PC-9 (cell line): ENCODE measurements at regions of chr2 and their contacts with region 1.

Region 1: GRCh38 chr2:128921751-128922150 is 603.1 kb upstream of the HS6ST1 start:
- DNase-seq: no peak
- H3K4me3 ChIP-seq: no peak overlapping the region
- H3K27ac ChIP-seq: no peak overlapping the region
- H3K4me1 ChIP-seq: no peaks in the 10 kb centered on the region
- H3K27me3 ChIP-seq: no peaks in the 10 kb centered on the region
- CTCF ChIP-seq: no peak

Region 2: DNA sequence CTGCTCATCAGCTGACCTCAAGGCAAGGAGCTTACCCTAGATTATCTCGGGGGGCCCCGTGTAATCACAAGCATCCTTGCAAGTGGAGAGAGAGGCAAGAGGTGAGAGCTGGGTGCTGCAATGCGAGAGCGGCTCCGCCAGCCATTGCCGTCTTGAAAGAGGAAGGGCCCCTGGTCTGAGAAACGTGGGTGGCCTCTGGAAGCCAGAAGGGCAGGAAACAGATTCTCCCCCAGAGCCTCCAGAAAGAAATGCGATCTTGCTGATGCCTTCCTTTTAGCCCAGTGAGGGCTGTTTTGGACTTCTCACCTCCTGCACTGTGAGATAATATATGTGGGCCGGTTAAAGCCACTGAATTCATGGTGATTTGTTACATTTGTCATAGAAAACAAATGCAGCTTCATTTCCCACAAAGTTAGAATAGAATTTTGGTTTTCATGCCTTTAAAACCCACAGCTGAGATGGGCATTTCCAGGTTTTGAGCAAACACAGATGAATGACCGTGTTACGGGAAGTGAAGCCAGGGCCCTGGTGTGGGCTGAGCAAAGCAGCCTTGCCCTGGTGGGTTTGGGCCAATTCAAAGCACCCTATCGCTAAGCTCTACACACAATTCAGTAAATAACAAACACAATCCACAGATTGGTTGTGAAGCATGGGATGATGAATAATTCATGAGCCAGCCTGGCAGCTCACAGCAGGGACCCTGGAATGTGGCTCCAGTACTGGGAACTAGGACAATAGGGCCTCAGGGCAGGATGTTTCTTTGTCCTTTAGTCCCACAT is 283.2 kb before region 1 on chr2:
- CTCF ChIA-PET with region 1: no interaction called
- POLR2A ChIA-PET with region 1: no interaction called
- intact Hi-C with region 1: no loop called
- DNase-seq: peak in 1 of 2 experiments; percentile 63
- H3K4me3 ChIP-seq: no peak overlapping the region
- H3K27ac ChIP-seq: no peak overlapping the region
- H3K4me1 ChIP-seq: no peaks in the 10 kb centered on the region
- H3K27me3 ChIP-seq: no peaks in the 10 kb centered on the region
- CTCF ChIP-seq: no peak

Region 3: DNA sequence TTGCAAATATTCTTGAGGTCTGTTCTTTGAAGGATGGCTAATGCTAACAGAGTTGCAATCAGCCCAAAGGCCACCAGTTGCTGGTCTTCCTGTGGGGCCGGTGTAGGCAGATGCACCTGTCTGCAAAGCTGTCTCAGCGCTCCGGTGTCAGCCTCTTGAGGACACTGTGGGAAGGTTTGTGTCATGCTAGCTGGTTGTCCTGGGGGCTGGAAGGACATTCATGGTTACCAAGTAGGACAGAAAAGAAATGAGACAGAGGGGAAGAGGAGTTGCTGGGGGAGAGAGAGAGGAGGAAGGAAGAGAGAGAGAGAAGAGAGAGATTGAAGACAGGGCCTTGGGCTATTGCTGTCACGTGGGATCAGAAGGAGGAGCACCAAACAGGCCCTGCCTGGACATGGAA is 36.5 kb after region 1 on chr2:
- CTCF ChIA-PET with region 1: no interaction called
- POLR2A ChIA-PET with region 1: interaction called, 14 read pairs
- intact Hi-C with region 1: no loop called
- DNase-seq: no peak
- H3K4me3 ChIP-seq: no peak overlapping the region
- H3K27ac ChIP-seq: no peak overlapping the region
- H3K4me1 ChIP-seq: no peaks in the 10 kb centered on the region
- H3K27me3 ChIP-seq: peaks cover 34% of the 10 kb centered on the region
- CTCF ChIP-seq: no peak

Region 4: GRCh38 chr2:129006135-129006886 is 84.6 kb after region 1 on chr2:
- CTCF ChIA-PET with region 1: no interaction called
- POLR2A ChIA-PET with region 1: no interaction called
- intact Hi-C with region 1: no loop called
- DNase-seq: no peak
- H3K4me3 ChIP-seq: no peak overlapping the region
- H3K27ac ChIP-seq: no peak overlapping the region
- H3K4me1 ChIP-seq: no peaks in the 10 kb centered on the region
- H3K27me3 ChIP-seq: peaks cover 46% of the 10 kb centered on the region
- CTCF ChIP-seq: no peak

Region 5: DNA sequence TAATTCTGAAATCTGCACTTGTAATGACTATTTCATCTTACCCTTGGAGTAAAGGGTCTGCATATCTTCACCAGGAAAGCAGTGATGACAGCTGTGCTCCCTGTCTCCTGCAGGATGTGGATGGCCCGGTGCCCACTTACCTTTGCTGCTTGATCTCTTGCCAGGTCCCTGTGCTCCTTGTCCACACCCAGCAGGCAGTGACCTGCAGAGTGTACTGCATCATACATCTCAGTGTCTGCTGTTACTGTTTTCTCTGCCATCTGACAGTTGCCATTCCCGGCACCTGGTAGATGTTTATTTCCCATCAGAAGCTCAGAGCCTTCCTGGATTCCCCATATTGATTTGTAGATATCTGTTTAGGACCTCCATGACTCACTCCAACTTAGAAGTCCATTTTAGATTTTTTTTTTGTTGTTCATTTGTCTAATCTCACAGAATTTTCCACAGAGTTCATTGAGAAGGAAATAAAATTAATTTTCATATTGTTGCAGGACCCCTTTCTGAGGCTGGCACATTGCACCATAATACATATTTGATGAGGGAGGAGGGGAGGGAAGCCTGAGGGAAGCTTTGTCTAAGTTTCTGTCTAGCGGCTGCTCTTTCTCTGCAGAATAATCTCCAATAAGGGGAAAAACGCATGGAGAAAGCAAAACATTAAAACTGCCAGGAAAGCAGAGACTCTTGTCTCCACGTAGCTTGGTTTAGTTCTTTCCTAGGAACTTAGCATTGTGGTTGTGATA is 360.2 kb after region 1 on chr2:
- CTCF ChIA-PET with region 1: no interaction called
- POLR2A ChIA-PET with region 1: no interaction called
- intact Hi-C with region 1: no loop called
- DNase-seq: no peak
- H3K4me3 ChIP-seq: no peak overlapping the region
- H3K27ac ChIP-seq: no peak overlapping the region
- H3K4me1 ChIP-seq: no peaks in the 10 kb centered on the region
- H3K27me3 ChIP-seq: no peaks in the 10 kb centered on the region
- CTCF ChIP-seq: no peak